ENCODE measurements at regions of chr3 and their contacts with region 1.

Region 1: DNA sequence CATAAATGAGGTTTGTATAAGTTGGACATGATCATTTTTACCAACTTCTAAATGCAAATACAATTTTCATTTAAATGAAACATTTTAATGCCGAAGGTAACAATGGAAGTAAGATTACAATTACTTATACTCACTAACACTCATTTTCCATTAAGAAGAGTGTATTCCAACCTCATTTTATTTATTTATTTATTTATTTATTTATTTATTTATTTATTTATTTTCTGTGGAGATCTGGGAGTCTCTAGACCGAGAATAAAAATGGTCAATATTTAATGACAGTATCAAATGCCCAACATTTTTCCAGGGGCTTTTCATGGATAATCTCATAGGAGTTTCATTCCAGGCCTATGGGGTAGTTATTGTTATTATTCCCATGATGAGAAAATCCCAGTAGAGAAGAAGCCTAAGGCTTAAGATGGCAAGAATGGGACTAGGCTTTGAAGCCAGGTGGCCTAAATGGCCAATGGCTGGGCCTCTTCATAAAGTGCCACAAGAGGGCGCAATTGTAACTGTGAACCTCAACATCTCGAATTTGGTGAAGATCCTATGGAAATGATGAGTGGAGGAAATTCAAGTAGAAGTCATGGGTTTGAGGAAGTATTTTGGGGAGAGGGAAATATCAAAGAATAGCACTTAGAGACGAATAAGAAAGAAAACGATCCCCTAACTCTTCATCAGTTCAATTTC is 21.3 kb downstream of the VGLL3 start:
- DNase-seq: peak; percentile 37
- H3K4me3 Mint-ChIP-seq: no peak overlapping the region
- H3K27ac Mint-ChIP-seq: no peak overlapping the region
- H3K4me1 Mint-ChIP-seq: no peaks in the 10 kb centered on the region
- H3K27me3 Mint-ChIP-seq: no peaks in the 10 kb centered on the region

Region 2: GRCh38 chr3:86464180-86464579 is 505.5 kb before region 1 on chr3:
- CTCF ChIA-PET with region 1: no interaction called
- DNase-seq: no peak
- H3K4me3 Mint-ChIP-seq: no peak overlapping the region
- H3K27ac Mint-ChIP-seq: no peak overlapping the region
- H3K4me1 Mint-ChIP-seq: no peaks in the 10 kb centered on the region
- H3K27me3 Mint-ChIP-seq: no peaks in the 10 kb centered on the region

Region 3: GRCh38 chr3:86929046-86929803 is 40.4 kb before region 1 on chr3:
- CTCF ChIA-PET with region 1: no interaction called
- DNase-seq: no peak
- H3K4me3 Mint-ChIP-seq: no peak overlapping the region
- H3K27ac Mint-ChIP-seq: no peak overlapping the region
- H3K4me1 Mint-ChIP-seq: no peaks in the 10 kb centered on the region
- H3K27me3 Mint-ChIP-seq: no peaks in the 10 kb centered on the region

Region 4: GRCh38 chr3:87082796-87083440 is 113.3 kb after region 1 on chr3:
- CTCF ChIA-PET with region 1: interaction called, 10 read pairs
- DNase-seq: no peak
- H3K4me3 Mint-ChIP-seq: no peak overlapping the region
- H3K27ac Mint-ChIP-seq: no peak overlapping the region
- H3K4me1 Mint-ChIP-seq: peaks cover 9% of the 10 kb centered on the region
- H3K27me3 Mint-ChIP-seq: no peaks in the 10 kb centered on the region

Region 5: DNA sequence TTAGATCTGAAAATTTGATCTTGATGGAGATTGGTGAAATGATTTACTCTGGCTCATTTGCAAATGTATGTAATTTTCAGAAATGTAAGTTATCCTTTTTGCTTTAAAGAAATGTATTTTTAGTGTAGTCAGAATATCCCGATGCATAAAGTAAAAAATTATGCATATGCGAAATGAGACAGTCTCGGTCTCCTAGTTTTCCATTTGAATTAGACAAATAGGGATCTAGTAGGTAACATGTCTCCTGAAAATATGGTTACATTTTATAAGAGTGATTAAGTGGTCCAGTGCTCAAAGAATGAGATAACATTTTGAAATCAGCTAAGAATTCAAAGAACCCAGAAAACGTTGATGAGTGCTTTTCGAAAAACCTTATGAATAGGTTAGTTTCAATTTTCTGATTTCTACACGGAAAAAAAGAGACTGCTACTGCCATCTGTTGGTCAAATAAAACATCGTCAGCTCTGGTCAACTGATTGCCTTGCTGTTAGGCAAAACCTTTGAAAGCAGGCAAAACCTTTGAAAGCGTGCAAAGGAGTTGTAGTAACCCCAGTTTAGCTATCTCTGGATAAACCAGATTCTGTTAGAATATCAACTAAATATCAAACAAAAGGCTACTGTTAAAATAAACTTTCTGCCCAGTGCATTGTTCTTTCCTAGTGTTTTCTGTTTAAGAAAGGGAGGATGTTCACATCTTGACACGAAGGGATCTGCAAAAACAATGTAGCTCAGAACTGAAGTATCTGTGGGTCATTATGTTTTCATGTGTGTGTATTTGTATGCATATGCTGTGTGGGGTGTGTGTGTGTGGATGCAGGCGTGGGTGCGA is 198.2 kb after region 1 on chr3:
- CTCF ChIA-PET with region 1: interaction called, 10 read pairs
- DNase-seq: peak; percentile 39
- H3K4me3 Mint-ChIP-seq: no peak overlapping the region
- H3K27ac Mint-ChIP-seq: no peak overlapping the region
- H3K4me1 Mint-ChIP-seq: peaks cover 4% of the 10 kb centered on the region
- H3K27me3 Mint-ChIP-seq: peaks cover 5% of the 10 kb centered on the region

Measured in activated naive CD4-positive, alpha-beta T cell treated with anti-CD3 and anti-CD28 coated beads, Interleukin-2, amount 10 ng/mL, durations not matched to agents 7 days and 5 days (primary cell).